ENCODE measurements at regions of chr3 and their contacts with region 1.

Region 1: GRCh38 chr3:32018757-32019564 is 37.4 kb downstream of the ZNF860 start:
- DNase-seq: peak in 4 of 14 experiments; percentile 13 to 62 (median 54)
- ATAC-seq: no peak
- H3K4me3 ChIP-seq: no peak overlapping the region
- H3K4me3 Mint-ChIP-seq: no peak overlapping the region
- H3K27ac ChIP-seq: no peak overlapping the region
- H3K27ac Mint-ChIP-seq: no peak overlapping the region
- H3K4me1 ChIP-seq: no peaks in the 10 kb centered on the region
- H3K4me1 Mint-ChIP-seq: no peaks in the 10 kb centered on the region
- H3K27me3 ChIP-seq: no peaks in the 10 kb centered on the region
- H3K27me3 Mint-ChIP-seq: no peaks in the 10 kb centered on the region
- CTCF ChIP-seq: peak; percentile 88

Region 2: GRCh38 chr3:32045091-32045964 is 26.4 kb after region 1 on chr3:
- CTCF ChIA-PET with region 1: no interaction called
- POLR2A ChIA-PET with region 1: no interaction called
- intact Hi-C with region 1: no loop called
- DNase-seq: no peak
- ATAC-seq: no peak
- H3K4me3 ChIP-seq: no peak overlapping the region
- H3K4me3 Mint-ChIP-seq: no peak overlapping the region
- H3K27ac ChIP-seq: no peak overlapping the region
- H3K27ac Mint-ChIP-seq: no peak overlapping the region
- H3K4me1 ChIP-seq: no peaks in the 10 kb centered on the region
- H3K4me1 Mint-ChIP-seq: no peaks in the 10 kb centered on the region
- H3K27me3 ChIP-seq: no peaks in the 10 kb centered on the region
- H3K27me3 Mint-ChIP-seq: no peaks in the 10 kb centered on the region
- CTCF ChIP-seq: no peak

Region 3: GRCh38 chr3:32334675-32335074 is 315.7 kb after region 1 on chr3:
- CTCF ChIA-PET with region 1: no interaction called
- POLR2A ChIA-PET with region 1: no interaction called
- intact Hi-C with region 1: loop called in 1 of 2 experiments (anchors 5 kb)
- DNase-seq: peak; percentile 50 to 78 (median 67)
- ATAC-seq: peak; percentile 90
- H3K4me3 ChIP-seq: no peak overlapping the region
- H3K4me3 Mint-ChIP-seq: peak overlapping the region; percentile 54
- H3K27ac ChIP-seq: peak overlapping the region; percentile 27 to 40
- H3K27ac Mint-ChIP-seq: peak overlapping the region; percentile 96
- H3K4me1 ChIP-seq: peaks cover 38% of the 10 kb centered on the region
- H3K4me1 Mint-ChIP-seq: peaks cover 67% of the 10 kb centered on the region
- H3K27me3 ChIP-seq: no peaks in the 10 kb centered on the region
- H3K27me3 Mint-ChIP-seq: no peaks in the 10 kb centered on the region
- CTCF ChIP-seq: peak; percentile 65

Region 4: DNA sequence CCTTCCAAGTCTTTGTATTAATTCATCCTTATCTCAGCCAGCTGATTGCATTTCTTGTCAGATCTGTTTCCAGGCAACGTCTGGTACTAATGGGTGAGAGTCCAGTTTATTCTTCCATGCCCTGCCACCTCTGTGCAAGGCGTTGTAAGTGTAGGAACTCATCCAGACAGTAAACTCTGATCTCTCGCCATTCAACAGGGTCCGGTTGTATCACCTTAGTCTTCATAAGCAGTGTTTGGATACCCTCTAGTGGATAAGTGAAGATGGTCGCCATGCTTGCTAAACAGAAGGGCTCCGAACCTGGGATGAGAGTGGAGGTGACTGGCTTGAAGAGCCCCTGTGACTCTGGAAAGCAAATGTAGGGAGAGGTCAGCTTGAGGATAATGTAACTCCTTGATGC is 321.1 kb after region 1 on chr3:
- CTCF ChIA-PET with region 1: no interaction called
- POLR2A ChIA-PET with region 1: no interaction called
- intact Hi-C with region 1: loop called (anchors 5 kb)
- DNase-seq: peak in 9 of 14 experiments; percentile 12 to 74 (median 28)
- ATAC-seq: peak; percentile 80
- H3K4me3 ChIP-seq: no peak overlapping the region
- H3K4me3 Mint-ChIP-seq: no peak overlapping the region
- H3K27ac ChIP-seq: no peak overlapping the region
- H3K27ac Mint-ChIP-seq: no peak overlapping the region
- H3K4me1 ChIP-seq: peaks cover 26% of the 10 kb centered on the region
- H3K4me1 Mint-ChIP-seq: peaks cover 35% of the 10 kb centered on the region
- H3K27me3 ChIP-seq: no peaks in the 10 kb centered on the region
- H3K27me3 Mint-ChIP-seq: no peaks in the 10 kb centered on the region
- CTCF ChIP-seq: peak; percentile 64